ENCODE measurements at regions of chr14 and their contacts with region 1.

Region 1: DNA sequence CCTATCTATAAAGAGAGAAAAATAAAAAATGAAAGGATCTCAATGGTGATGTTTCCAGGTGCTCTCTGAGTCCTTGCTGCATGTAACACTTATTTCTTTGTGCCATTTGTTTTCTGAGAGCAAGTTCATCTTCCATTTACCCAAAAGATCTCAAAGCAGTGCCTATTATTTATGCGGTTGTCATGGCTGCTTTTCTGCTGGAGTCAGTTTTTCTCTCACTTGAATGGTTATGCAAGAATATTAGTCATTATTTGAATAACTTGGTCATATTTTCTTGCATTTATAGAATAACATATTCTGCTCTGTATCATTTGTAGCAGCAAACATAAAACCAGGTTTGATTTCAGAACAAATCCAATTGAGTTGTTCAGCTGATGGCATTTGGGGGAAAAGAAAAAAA is 141.8 kb upstream of the G2E3 start:
- DNase-seq: no peak
- ATAC-seq: no peak
- H3K4me3 ChIP-seq: no peak overlapping the region
- H3K27ac ChIP-seq: no peak overlapping the region
- H3K4me1 ChIP-seq: no peaks in the 10 kb centered on the region
- H3K27me3 ChIP-seq: no peaks in the 10 kb centered on the region
- CTCF ChIP-seq: no peak

Region 2: GRCh38 chr14:29982993-29983392 is 434.1 kb before region 1 on chr14:
- CTCF ChIA-PET with region 1: interaction called, 16 read pairs
- POLR2A ChIA-PET with region 1: no interaction called
- in situ Hi-C with region 1: no loop called
- intact Hi-C with region 1: no loop called
- DNase-seq: no peak
- ATAC-seq: no peak
- H3K4me3 ChIP-seq: no peak overlapping the region
- H3K27ac ChIP-seq: no peak overlapping the region
- H3K4me1 ChIP-seq: no peaks in the 10 kb centered on the region
- H3K27me3 ChIP-seq: no peaks in the 10 kb centered on the region
- CTCF ChIP-seq: no peak

Region 3: DNA sequence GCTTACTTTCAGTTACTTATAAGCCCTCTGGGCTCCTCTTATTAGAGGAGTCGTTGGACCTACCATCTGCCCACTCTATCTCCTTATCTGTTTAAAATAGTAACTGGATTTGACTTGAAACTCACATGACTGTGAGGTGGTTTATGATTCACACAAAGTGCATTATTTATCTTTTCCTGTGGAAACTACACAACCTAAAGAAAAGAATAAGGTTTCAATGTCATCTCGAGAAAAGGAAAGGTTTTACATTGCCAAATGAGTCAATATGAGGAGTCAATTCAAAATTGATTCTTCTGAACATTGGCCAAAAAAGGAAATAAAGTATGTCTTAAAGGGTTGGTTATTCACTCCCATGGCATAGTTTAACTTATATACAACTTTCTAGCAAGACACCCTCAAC is 83.2 kb before region 1 on chr14:
- CTCF ChIA-PET with region 1: no interaction called
- POLR2A ChIA-PET with region 1: no interaction called
- in situ Hi-C with region 1: no loop called
- intact Hi-C with region 1: no loop called
- DNase-seq: no peak
- ATAC-seq: no peak
- H3K4me3 ChIP-seq: no peak overlapping the region
- H3K27ac ChIP-seq: no peak overlapping the region
- H3K4me1 ChIP-seq: no peaks in the 10 kb centered on the region
- H3K27me3 ChIP-seq: no peaks in the 10 kb centered on the region
- CTCF ChIP-seq: no peak

Measured in Panc1 (cell line).